Activated CD4-positive, alpha-beta T cell treated with anti-CD3 and anti-CD28 coated beads for 36 hours (primary cell): ENCODE measurements at regions of chr20 and their contacts with region 1.

Region 1: DNA sequence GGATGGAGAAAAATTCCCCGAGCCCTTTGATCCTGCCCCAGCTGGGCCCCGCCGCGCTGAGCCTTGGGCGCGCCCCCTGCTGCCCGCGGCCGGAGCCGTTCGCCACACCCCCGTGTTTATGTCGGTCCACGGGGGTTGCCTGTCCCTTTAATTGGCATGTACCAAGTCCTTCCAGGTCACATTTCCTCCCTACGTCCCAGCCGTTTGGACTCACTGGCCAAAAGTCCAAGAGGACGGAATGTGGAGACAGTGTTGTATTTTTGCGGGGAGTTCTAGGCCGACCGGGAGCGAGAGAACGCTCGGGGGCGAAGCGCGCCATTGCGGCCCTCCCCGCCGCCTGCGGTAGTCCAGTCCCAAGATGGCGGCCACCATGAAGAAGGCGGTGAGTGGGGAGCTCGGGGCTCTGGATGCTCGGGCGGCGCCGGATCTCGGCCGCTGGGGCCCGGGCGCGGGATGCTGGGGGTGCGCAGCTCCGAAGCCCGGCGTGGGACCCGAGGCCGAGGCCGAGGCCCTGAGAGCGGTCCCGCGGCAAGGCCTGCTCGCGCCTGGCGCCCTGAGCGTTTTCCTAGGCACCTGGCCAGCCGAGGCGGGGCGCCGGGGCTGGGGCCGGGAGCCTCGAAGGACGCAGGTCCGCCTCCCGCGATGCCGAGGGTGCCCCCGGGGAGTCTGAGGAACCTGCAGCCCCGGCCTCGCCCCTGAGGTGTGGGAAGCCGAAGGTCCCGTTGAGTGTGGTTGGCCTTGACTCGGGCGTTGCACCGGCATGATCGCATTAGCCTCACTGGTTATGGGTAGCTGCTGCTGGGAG is at the start of gene PFDN4:
- DNase-seq: peak; percentile 88
- ATAC-seq: peak; percentile 82
- H3K4me3 Mint-ChIP-seq: peak within 1 kb of the TSS; percentile 80
- H3K27ac Mint-ChIP-seq: peak within 1 kb of the TSS; percentile 99
- H3K4me1 Mint-ChIP-seq: peaks cover 47% of the 10 kb centered on the region
- H3K27me3 Mint-ChIP-seq: no peaks in the 10 kb centered on the region
- total RNA-seq, gene PFDN4: 55.4 to 60.5 TPM

Region 2: GRCh38 chr20:53949319-53949889 is 258.5 kb before region 1 on chr20:
- CTCF ChIA-PET with region 1: interaction called, 3 read pairs
- POLR2A ChIA-PET with region 1: no interaction called
- intact Hi-C with region 1: loop called (anchors 5 to 10 kb)
- DNase-seq: peak; percentile 88
- ATAC-seq: peak; percentile 94
- H3K4me3 Mint-ChIP-seq: peak overlapping the region; percentile 64
- H3K27ac Mint-ChIP-seq: peak overlapping the region; percentile 92
- H3K4me1 Mint-ChIP-seq: peaks cover 29% of the 10 kb centered on the region
- H3K27me3 Mint-ChIP-seq: no peaks in the 10 kb centered on the region

Region 3: GRCh38 chr20:54103067-54103761 is 104.7 kb before region 1 on chr20:
- CTCF ChIA-PET with region 1: interaction called, 14 read pairs
- POLR2A ChIA-PET with region 1: no interaction called
- intact Hi-C with region 1: no loop called
- DNase-seq: peak; percentile 89
- ATAC-seq: peak; percentile 77
- H3K4me3 Mint-ChIP-seq: no peak overlapping the region
- H3K27ac Mint-ChIP-seq: no peak overlapping the region
- H3K4me1 Mint-ChIP-seq: peaks cover 5% of the 10 kb centered on the region
- H3K27me3 Mint-ChIP-seq: peaks cover 10% of the 10 kb centered on the region

Region 4: GRCh38 chr20:54228858-54229257 is 20.9 kb after region 1 on chr20:
- CTCF ChIA-PET with region 1: no interaction called
- POLR2A ChIA-PET with region 1: no interaction called
- intact Hi-C with region 1: no loop called
- DNase-seq: no peak
- ATAC-seq: no peak
- H3K4me3 Mint-ChIP-seq: no peak overlapping the region
- H3K27ac Mint-ChIP-seq: no peak overlapping the region
- H3K4me1 Mint-ChIP-seq: peaks cover 2% of the 10 kb centered on the region
- H3K27me3 Mint-ChIP-seq: no peaks in the 10 kb centered on the region

Region 5: DNA sequence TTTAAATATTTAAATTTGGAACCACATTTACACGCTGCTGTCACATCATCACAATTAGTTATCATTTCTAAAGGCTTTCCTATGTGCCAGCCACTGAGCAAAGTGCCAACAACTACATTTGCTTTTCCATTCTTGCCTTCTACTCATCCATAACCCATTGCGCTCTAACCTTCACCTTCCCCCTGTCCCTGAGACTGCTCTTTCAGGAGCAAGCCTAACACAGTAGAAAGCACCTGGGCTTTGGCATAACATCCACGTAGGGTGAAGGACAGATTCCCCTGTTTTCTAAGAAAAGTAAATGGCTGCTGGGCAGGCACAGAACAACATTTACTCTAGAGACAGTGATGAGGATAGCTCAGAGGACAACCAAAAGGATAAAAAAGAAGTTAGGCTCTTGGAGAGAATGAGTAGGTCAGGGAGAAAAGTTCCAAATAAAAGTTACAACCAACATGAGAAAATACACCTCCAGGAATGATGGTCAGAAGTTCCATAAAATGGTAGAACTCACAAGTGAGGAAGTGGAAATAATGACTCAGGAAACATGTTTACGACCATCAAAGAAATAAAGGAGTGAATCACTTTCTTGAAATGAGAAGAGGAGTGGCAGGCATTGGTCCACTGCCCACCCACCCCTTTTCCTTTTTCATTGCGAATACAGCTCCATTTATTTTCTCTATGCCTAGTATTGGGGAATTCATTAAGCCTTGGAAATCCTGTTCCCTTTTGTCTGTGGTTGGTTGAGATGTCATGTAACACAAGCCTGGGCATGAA is 77.2 kb after region 1 on chr20:
- CTCF ChIA-PET with region 1: interaction called, 5 read pairs
- POLR2A ChIA-PET with region 1: no interaction called
- intact Hi-C with region 1: loop called in 1 of 2 experiments (anchors 1 kb)
- DNase-seq: peak; percentile 68
- ATAC-seq: peak; percentile 87
- H3K4me3 Mint-ChIP-seq: peak overlapping the region; percentile 62
- H3K27ac Mint-ChIP-seq: peak overlapping the region; percentile 94
- H3K4me1 Mint-ChIP-seq: peaks cover 22% of the 10 kb centered on the region
- H3K27me3 Mint-ChIP-seq: peaks cover 11% of the 10 kb centered on the region